Sigmoid colon (tissue), 7 donors: ENCODE measurements at regions of chr1 and their contacts with region 1.

Region 1: DNA sequence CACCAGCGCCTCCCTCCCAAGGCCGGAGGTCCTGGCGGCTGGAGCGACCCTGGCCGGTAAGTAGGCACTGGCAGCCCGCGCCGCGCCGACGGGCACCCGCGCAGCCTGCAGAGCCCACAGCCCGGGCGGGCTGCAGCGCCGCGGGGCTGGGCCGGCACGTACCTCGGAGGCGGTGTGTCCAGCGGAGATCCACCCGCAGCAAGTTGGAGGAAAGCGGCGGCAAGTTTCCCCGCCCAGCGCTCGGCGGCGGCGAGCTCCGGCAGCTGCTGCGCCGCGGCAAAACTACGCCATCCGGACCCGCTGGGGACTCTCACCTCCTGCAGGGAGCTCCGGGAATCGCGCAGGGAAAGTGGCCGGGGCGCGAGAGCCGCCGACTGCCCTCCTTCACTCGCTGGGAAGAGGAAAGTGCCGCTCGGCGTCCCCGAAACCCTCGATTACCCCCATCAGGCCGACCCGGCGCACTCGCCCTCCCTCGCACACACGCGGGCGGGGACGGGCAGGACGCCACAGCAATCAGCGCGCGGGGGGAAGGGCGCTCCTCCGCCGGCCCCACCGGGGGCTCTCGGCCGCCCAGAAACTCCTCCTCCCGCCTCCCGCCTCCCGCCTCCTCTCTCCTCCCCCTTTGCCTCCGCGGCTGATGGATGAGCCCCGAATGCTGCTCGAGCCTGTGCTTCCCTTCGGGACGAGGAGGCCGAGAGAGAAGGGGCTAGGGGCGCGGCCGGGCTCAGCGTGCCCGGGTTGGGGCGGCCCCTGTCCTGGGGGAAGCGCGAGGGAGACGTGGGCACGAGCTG is at the start of gene TGFBR3:
- DNase-seq: peak; percentile 98
- H3K4me3 ChIP-seq: peak within 1 kb of the TSS; percentile 89 to 100 (median 96)
- H3K27ac ChIP-seq: peak within 1 kb of the TSS; percentile 95 to 99 (median 98)
- H3K4me1 ChIP-seq: peaks cover 0 to 39% (median 24%) of the 10 kb centered on the region in 4 donors
- H3K27me3 ChIP-seq: no peaks in the 10 kb centered on the region
- CTCF ChIP-seq: peak in 3 of 4 experiments; percentile 38 to 59 (median 49)
- EP300 ChIP-seq: peak in 2 of 4 donors; percentile 49 to 70
- POLR2A ChIP-seq: peak; percentile 69 to 76
- total RNA-seq, gene TGFBR3: 92.2 to 170 (median 141) TPM

Region 2: GRCh38 chr1:91080650-91081049 is 805.3 kb before region 1 on chr1:
- intact Hi-C with region 1: no loop called
- DNase-seq: no peak
- H3K4me3 ChIP-seq: no peak overlapping the region
- H3K27ac ChIP-seq: no peak overlapping the region
- H3K4me1 ChIP-seq: no peaks in the 10 kb centered on the region
- H3K27me3 ChIP-seq: no peaks in the 10 kb centered on the region
- CTCF ChIP-seq: no peak
- EP300 ChIP-seq: no peak
- POLR2A ChIP-seq: no peak

Region 3: DNA sequence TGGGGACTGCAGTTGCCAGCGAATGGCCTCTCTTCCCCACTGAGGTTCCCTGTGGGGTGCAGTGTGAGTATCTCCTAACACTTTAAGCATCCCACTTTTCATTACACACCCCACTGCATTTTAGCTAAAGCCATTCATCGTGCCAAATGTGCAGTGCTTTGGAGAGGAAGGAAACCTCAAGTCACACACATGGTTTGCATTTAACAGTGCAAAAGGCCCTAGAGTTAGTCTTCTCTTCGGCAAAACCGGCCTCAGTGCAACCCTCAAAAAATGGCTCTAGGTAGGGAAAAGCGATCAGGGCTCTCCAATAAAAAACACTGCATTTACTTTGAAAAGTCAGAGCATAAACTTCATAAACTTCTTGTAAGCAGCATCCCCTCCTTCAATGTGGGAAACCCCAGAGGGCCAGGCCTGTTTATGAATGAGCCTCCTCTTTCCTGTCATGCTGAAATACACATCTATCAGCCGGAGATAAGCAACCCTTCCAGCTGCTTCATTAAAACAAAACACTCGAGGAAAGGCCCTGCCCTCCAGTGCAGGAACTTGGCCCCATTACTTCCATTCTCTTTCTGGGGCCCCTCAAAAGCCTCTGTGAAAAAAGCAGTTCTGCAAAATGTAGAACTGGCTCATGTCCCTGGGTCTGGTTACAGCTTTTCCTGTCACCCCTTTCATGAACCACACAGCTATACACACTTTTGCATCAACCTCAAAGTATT is 201.3 kb before region 1 on chr1:
- intact Hi-C with region 1: loop called (anchors 5 kb)
- DNase-seq: no peak
- H3K4me3 ChIP-seq: no peak overlapping the region
- H3K27ac ChIP-seq: peak overlapping the region; percentile 24 to 56 (median 54)
- H3K4me1 ChIP-seq: peaks cover 0 to 28% (median 23%) of the 10 kb centered on the region in 4 donors
- H3K27me3 ChIP-seq: no peaks in the 10 kb centered on the region
- CTCF ChIP-seq: no peak
- EP300 ChIP-seq: no peak
- POLR2A ChIP-seq: no peak

Region 4: DNA sequence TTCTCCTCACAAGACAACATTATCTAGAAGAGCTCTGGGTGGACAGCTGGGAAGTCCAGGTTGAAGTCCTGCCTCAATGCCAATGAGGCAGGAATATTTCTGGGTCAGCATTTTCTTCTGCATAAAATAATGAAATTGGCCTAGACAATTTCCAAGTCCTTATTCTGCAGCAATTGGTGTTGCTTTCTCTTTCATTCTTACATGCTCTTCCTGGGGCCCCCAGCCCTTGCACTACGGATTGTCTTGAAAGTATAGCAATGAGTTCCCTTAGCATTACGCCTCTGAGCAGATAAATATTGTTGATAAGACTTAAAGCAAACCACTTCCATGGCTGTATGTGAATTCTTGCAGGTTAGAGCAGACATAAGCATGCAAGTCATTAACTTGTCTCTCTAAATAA is 188.5 kb before region 1 on chr1:
- intact Hi-C with region 1: no loop called
- DNase-seq: no peak
- H3K4me3 ChIP-seq: no peak overlapping the region
- H3K27ac ChIP-seq: peak overlapping the region in 2 of 4 donors; percentile 5 to 39
- H3K4me1 ChIP-seq: peaks cover 0 to 33% (median 24%) of the 10 kb centered on the region in 4 donors
- H3K27me3 ChIP-seq: no peaks in the 10 kb centered on the region
- CTCF ChIP-seq: no peak
- EP300 ChIP-seq: no peak
- POLR2A ChIP-seq: no peak

Region 5: DNA sequence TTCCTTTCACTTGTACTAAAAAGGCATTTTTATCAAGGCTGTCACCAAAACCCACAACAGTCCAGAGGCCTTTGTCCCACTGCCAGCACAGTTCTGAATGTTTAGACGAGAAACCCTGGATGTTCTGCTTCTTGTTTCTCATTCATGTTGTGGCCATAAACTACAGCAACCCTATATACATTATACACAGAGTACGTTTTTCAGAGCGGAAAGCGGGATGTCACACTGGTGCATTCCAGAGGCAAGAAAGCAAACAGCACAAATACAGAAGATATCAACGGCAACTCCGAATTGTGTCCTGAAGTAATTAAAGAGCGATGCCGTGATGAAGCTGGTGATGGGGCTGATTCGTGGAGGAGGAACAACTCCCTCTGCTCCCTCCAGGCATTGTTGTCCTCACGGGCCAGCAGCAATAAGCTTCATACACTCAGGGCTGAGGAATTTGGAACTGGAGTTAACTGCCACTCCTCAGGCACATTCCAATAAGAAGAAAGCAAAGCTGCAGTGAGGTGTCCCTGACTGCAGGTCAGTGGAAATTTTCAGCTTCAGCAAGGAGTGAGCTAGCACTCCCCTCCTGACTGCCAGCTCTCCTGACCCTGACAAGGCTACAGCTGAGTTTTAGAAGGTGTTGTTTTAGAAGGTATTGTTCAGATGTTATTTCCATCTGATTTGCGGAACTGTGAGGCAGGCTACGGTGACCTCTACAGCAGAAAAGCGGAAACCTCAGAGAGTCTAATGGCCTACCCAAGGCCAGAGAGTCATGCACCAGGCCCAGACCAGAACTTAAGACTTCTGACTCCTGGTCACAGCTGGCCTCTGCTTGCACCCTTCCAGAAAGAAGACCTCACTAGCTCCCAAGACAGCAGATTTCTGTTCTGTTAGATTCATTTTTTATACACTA is 148.9 kb before region 1 on chr1:
- intact Hi-C with region 1: loop called (anchors 5 kb)
- DNase-seq: peak; percentile 87
- H3K4me3 ChIP-seq: peak overlapping the region in 1 of 4 donors; percentile 4
- H3K27ac ChIP-seq: peak overlapping the region; percentile 76 to 94 (median 88)
- H3K4me1 ChIP-seq: peaks cover 0 to 74% (median 70%) of the 10 kb centered on the region in 4 donors
- H3K27me3 ChIP-seq: no peaks in the 10 kb centered on the region
- CTCF ChIP-seq: no peak
- EP300 ChIP-seq: peak in 1 of 4 donors; percentile 48
- POLR2A ChIP-seq: no peak

Region 6: GRCh38 chr1:91846007-91846617 is 39.8 kb before region 1 on chr1:
- intact Hi-C with region 1: loop called (anchors 5 kb)
- DNase-seq: peak; percentile 77
- H3K4me3 ChIP-seq: no peak overlapping the region
- H3K27ac ChIP-seq: peak overlapping the region; percentile 72 to 80 (median 77)
- H3K4me1 ChIP-seq: peaks cover 0 to 61% (median 42%) of the 10 kb centered on the region in 4 donors
- H3K27me3 ChIP-seq: no peaks in the 10 kb centered on the region
- CTCF ChIP-seq: no peak
- EP300 ChIP-seq: no peak
- POLR2A ChIP-seq: no peak

Region 7: DNA sequence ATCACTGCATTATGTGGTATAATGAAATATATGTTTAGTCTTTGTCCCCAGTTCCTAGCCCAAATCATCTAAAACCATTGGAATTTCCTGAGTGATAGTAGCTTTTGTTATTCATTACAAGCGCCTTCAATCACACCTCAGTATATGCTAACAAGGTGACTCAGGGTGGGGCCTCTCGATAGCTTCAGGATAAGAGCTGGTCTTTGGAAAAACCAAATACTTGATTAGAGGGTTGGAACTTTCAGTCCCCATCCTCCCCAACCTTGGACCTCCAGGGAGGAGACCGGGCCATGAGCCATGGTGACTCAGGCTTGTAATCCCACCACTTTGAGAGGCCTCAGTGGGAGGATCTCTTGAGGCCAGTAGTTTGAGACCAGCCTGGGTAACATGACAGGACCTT is 58.2 kb after region 1 on chr1:
- intact Hi-C with region 1: no loop called
- DNase-seq: no peak
- H3K4me3 ChIP-seq: no peak overlapping the region
- H3K27ac ChIP-seq: no peak overlapping the region
- H3K4me1 ChIP-seq: no peaks in the 10 kb centered on the region
- H3K27me3 ChIP-seq: no peaks in the 10 kb centered on the region
- CTCF ChIP-seq: no peak
- EP300 ChIP-seq: no peak
- POLR2A ChIP-seq: no peak

Region 8: DNA sequence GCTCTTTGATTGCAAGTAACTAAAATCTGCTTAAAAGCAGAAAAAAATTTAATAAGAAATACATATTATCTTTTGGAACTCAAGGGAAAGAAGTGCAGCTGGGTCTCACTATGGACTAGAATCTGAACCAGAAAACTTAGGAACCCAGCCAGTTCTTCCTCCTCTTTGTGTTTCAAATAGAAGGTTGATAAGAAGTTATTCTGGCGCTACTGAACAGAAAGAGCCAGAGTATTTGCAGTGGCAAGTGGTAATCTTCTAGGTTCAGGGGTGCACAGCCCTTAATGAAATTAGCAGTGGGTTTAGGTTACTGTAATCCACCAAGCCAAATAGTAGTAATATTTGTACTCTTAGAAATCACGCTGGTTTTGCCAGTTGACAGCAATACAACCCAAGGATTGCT is 222.7 kb after region 1 on chr1:
- intact Hi-C with region 1: no loop called
- DNase-seq: no peak
- H3K4me3 ChIP-seq: no peak overlapping the region
- H3K27ac ChIP-seq: no peak overlapping the region
- H3K4me1 ChIP-seq: no peaks in the 10 kb centered on the region
- H3K27me3 ChIP-seq: no peaks in the 10 kb centered on the region
- CTCF ChIP-seq: no peak
- EP300 ChIP-seq: no peak
- POLR2A ChIP-seq: no peak